H1 (cell line): ENCODE measurements at regions of chr5 and their contacts with region 1.

Region 1: DNA sequence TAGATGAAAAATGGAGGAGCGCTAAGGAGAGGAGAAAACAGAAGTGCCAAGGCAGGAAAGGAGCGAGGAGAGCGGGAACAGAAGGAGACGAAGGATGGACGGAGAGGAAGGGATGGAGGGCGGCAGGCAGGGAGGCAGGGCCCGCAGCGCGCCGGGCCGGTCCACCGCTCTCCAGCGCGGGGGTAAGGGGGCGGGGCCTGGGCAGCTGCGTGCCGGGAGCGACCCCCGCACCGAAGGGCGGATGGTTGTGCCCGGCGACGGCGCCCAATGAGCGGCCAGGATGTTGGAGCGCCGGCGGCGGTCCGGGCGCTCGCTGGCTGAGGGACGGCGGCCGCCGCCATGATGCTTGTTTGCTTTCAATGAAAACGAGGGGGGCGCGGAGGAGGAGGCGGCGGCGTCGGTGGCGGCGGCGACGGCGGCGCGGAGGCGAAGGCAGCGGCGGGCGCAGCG is at the start of gene CNOT6:
- DNase-seq: peak; percentile 78 to 95
- H3K4me3 ChIP-seq: peak within 1 kb of the TSS; percentile 86 to 98 (median 91)
- H3K27ac ChIP-seq: peak within 1 kb of the TSS; percentile 96; the same call in 1 of the 2 replicates
- H3K4me1 ChIP-seq: peaks cover 0 to 8% (median 3%) of the 10 kb centered on the region in 4 experiments; a peak in 6 of 7 replicates
- H3K27me3 ChIP-seq: no peaks in the 10 kb centered on the region
- CTCF ChIP-seq: no peak
- EP300 ChIP-seq: peak in 1 of 2 experiments; percentile 100; a peak in 2 of 3 replicates
- POLR2A ChIP-seq: peak; percentile 63 to 87; a peak in 2 of 3 replicates
- RAD21 ChIP-seq: no peak
- total RNA-seq, gene CNOT6: 45.4 and 48.0 TPM in 2 replicates

Region 2: DNA sequence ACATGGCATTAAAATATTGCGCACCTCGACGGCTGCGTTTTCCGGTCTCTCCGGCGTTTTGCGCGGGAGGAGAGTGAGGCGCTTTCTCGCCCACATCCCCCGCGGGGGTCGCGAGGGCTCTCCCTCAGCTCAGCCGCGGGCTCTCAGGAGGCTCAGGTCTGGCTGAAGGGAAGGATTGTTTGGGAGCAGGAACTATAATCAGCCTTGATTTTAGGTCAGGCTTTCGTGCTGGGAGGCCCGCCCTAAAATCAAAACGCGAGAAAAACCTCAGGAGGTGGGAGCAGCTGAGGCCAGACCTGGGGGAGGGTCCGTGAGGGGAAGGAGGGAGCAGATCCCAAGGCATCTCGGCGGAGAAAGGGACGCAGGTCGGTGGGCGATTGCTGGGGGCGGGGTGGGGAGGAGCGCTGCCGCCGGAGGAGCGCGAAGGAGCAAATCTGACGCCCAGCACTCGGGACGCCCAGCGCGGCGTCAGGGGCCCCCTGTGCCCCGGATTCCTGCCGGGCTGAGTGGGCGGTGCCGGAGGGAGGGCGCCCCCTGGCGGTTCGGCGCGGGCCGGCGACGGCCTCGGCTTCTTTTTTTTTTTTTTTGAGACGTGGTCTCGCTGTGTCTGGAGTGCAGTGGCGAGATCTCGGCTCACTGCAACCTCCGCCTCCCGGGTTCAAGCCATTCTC is 403.9 kb before region 1 on chr5:
- CTCF ChIA-PET with region 1: no interaction called
- POLR2A ChIA-PET with region 1: no interaction called
- DNase-seq: peak; percentile 80 to 95
- H3K4me3 ChIP-seq: peak overlapping the region; percentile 13 to 62 (median 24); a peak in 7 of 8 replicates
- H3K27ac ChIP-seq: peak overlapping the region; percentile 84
- H3K4me1 ChIP-seq: peaks cover 1 to 14% (median 9%) of the 10 kb centered on the region in 4 experiments
- H3K27me3 ChIP-seq: no peaks in the 10 kb centered on the region
- CTCF ChIP-seq: peak; percentile 69 to 87 (median 80)
- EP300 ChIP-seq: peak in 1 of 2 experiments; percentile 57; a peak in 1 of 3 replicates
- POLR2A ChIP-seq: peak in 1 of 2 experiments; percentile 52; a peak in 2 of 3 replicates
- RAD21 ChIP-seq: peak; percentile 72 to 76

Region 3: GRCh38 chr5:180519098-180519497 is 25.0 kb after region 1 on chr5:
- CTCF ChIA-PET with region 1: no interaction called
- POLR2A ChIA-PET with region 1: interaction called, 11 read pairs
- DNase-seq: no peak
- H3K4me3 ChIP-seq: no peak overlapping the region
- H3K27ac ChIP-seq: no peak overlapping the region
- H3K4me1 ChIP-seq: peaks cover 2 to 8% (median 7%) of the 10 kb centered on the region in 4 experiments; a peak in 5 of 7 replicates
- H3K27me3 ChIP-seq: no peaks in the 10 kb centered on the region
- CTCF ChIP-seq: no peak
- EP300 ChIP-seq: no peak
- POLR2A ChIP-seq: no peak
- RAD21 ChIP-seq: no peak